GM18951 (cell line): ENCODE measurements at regions of chr11 and their contacts with region 1.

Region 1: DNA sequence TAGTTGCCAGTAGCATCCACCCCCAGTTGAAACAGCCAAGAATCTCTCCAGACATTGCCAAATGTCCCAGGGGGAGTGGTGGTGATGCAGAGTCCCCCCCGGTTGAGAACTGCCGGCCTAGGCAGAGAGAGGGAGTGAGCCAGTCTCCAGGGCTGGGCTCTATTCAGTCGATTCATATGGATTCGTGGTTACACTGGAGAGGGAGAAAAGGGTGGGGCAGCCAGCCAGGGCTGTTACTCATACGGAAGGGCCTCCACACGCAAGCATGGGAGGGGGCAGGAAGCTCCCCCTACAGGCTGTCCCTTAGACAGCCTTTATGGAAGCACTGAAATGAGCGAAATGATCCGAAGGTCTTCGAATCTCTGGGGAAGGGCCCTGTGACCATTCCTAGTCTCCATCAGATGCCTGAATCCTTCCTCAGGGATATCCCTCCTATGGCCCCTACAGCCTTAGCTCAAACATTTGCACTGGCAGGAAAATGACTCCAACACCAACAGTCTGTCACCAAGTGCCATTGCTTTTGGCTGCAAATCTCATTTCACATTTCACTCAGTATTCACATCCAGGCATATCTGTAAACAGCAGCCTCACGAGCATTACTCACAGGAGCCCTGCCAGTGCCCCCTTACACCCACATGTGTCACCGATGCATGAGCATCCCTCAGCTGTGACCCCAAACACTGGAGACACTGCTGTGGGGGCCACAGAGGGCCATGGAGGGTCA is 18.4 kb upstream of the TLCD5 start:
- POLR2A ChIP-seq: no peak

Region 2: DNA sequence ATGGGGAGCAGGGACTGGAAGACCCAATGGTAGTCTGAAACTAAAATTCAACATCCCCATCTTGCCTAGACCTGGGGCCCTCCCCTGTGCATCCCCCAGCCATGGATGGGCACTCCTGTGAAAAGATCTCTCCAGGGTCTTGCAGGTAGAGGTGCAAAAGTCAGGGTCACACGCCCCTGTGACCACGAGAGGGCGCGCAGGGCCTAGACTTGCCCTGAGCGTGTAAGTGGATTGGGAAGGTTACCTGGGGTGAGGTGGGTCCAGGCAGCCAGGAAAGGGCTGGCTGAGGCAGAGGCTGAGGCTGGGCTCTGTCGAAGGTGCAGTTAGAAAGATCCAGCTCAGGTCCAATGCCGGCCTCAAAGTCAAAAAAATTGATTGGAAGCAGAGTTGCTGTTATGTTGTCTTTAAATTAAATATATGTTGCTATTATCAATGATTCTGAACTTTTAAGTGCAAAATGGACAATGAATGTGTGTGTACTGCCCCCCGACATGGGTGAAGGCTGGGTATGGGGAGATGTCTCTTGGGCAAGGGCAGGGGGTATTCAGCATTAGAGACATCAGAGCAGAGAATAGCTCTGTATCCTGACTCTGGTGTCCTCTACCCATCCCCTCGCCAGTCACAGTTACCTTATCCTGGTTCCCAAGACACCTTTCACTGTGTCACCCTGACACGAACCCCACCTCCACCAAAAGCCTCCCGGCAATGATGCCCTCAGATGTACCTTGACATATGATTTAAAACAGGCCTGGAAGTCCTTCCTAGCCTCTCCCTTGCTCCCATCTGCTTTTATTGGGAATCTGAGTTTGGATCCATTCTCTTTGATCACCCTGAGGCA is 71.4 kb before region 1 on chr11:
- in situ Hi-C with region 1: loop called (anchors 5 kb)
- POLR2A ChIP-seq: no peak